Calu3 (cell line): ENCODE measurements at regions of chr4 and their contacts with region 1.

Region 1: GRCh38 chr4:90357117-90357710 is 230.0 kb downstream of the CCSER1 start:
- DNase-seq: no peak
- H3K4me3 Mint-ChIP-seq: no peak overlapping the region
- H3K27ac Mint-ChIP-seq: no peak overlapping the region
- H3K4me1 Mint-ChIP-seq: no peaks in the 10 kb centered on the region
- H3K27me3 Mint-ChIP-seq: no peaks in the 10 kb centered on the region
- CTCF ChIP-seq: peak; percentile 42

Region 2: GRCh38 chr4:90474484-90474883 is 117.3 kb after region 1 on chr4:
- CTCF ChIA-PET with region 1: no interaction called
- intact Hi-C with region 1: no loop called
- DNase-seq: no peak
- H3K4me3 Mint-ChIP-seq: peak overlapping the region; percentile 29
- H3K27ac Mint-ChIP-seq: peak overlapping the region; percentile 71
- H3K4me1 Mint-ChIP-seq: peaks cover 19% of the 10 kb centered on the region
- H3K27me3 Mint-ChIP-seq: no peaks in the 10 kb centered on the region
- CTCF ChIP-seq: no peak

Region 3: GRCh38 chr4:91502365-91502764 is 1145.2 kb after region 1 on chr4:
- CTCF ChIA-PET with region 1: no interaction called
- intact Hi-C with region 1: loop called (anchors 5 kb)
- DNase-seq: peak; percentile 19
- H3K4me3 Mint-ChIP-seq: no peak overlapping the region
- H3K27ac Mint-ChIP-seq: no peak overlapping the region
- H3K4me1 Mint-ChIP-seq: no peaks in the 10 kb centered on the region
- H3K27me3 Mint-ChIP-seq: no peaks in the 10 kb centered on the region
- CTCF ChIP-seq: peak; percentile 31